CD4-positive, alpha-beta memory T cell (primary cell): ENCODE measurements at regions of chr1 and their contacts with region 1.

Region 1: DNA sequence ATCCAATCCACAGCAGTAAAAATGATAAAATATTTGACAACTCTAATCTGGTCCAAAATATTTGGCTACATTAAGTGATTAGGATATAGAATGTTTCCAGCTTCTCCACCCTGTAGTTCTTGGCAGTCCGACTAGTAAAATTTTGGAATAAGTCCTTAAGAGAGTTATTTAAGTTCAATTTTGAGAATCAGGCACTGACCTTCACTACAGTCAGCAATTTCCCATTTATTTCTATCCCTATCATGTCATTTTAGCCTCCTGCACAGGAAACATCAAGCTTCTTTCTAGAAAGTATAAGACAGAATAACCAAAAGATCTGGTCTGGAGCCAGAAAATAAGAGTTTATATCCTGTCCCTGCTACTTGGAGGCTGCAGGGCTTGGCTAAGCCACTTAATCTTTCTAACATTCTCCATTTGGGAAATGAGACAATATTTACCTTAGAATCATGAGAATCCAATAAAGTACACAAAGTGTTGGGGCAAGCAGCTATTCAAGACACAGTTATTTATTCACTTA is 162.2 kb downstream of the DPYD start:
- DNase-seq: no peak
- H3K4me3 ChIP-seq: no peak overlapping the region
- H3K4me3 Mint-ChIP-seq: no peak overlapping the region
- H3K27ac ChIP-seq: no peak overlapping the region
- H3K27ac Mint-ChIP-seq: no peak overlapping the region
- H3K4me1 ChIP-seq: no peaks in the 10 kb centered on the region
- H3K4me1 Mint-ChIP-seq: peaks cover 0 to 12% (median 8%) of the 10 kb centered on the region in 4 donors
- H3K27me3 ChIP-seq: no peaks in the 10 kb centered on the region
- H3K27me3 Mint-ChIP-seq: no peaks in the 10 kb centered on the region

Region 2: DNA sequence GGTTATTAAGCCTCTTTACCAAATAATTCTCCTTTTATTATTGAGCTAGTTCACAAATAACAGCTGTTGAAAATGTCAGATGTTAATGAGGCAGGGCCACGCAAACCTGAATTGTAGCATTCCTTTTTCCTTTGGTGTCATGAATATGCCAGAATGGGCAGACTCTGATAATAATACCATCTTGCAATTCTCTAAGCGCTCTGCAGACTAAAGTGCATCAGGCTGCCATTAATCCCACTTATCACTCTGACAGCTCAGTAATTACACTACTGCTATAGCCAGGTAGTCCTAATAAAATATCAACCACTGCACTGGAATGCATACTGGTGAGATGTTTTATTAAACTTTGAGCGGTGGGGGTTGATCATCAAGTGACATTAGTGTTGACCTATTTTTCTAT is 15.5 kb before region 1 on chr1:
- CTCF ChIA-PET with region 1: interaction called, 3 read pairs
- POLR2A ChIA-PET with region 1: no interaction called
- intact Hi-C with region 1: loop called (anchors 1 kb)
- DNase-seq: no peak
- H3K4me3 ChIP-seq: no peak overlapping the region
- H3K4me3 Mint-ChIP-seq: no peak overlapping the region
- H3K27ac ChIP-seq: no peak overlapping the region
- H3K27ac Mint-ChIP-seq: no peak overlapping the region
- H3K4me1 ChIP-seq: no peaks in the 10 kb centered on the region
- H3K4me1 Mint-ChIP-seq: peaks cover 4 to 10% (median 7%) of the 10 kb centered on the region in 4 donors
- H3K27me3 ChIP-seq: no peaks in the 10 kb centered on the region
- H3K27me3 Mint-ChIP-seq: no peaks in the 10 kb centered on the region